Activated naive CD4-positive, alpha-beta T cell treated with anti-CD3 and anti-CD28 coated beads for 36 hours (primary cell): ENCODE measurements at regions of chr21 and their contacts with region 1.

Region 1: GRCh38 chr21:33608559-33608958 is 20.1 kb upstream of the DONSON start:
- DNase-seq: no peak
- H3K4me3 Mint-ChIP-seq: no peak overlapping the region
- H3K27ac Mint-ChIP-seq: peak overlapping the region; percentile 1
- H3K4me1 Mint-ChIP-seq: no peaks in the 10 kb centered on the region
- H3K27me3 Mint-ChIP-seq: no peaks in the 10 kb centered on the region

Region 2: GRCh38 chr21:33441489-33442477 is 166.8 kb before region 1 on chr21:
- CTCF ChIA-PET with region 1: interaction called, 10 read pairs
- intact Hi-C with region 1: loop called (anchors 1 kb)
- DNase-seq: no peak
- H3K4me3 Mint-ChIP-seq: no peak overlapping the region
- H3K27ac Mint-ChIP-seq: no peak overlapping the region
- H3K4me1 Mint-ChIP-seq: peaks cover 4% of the 10 kb centered on the region
- H3K27me3 Mint-ChIP-seq: no peaks in the 10 kb centered on the region

Region 3: GRCh38 chr21:33578959-33579542 is 29.5 kb before region 1 on chr21:
- CTCF ChIA-PET with region 1: interaction called, 14 read pairs
- intact Hi-C with region 1: no loop called
- DNase-seq: no peak
- H3K4me3 Mint-ChIP-seq: no peak overlapping the region
- H3K27ac Mint-ChIP-seq: peak overlapping the region; percentile 82
- H3K4me1 Mint-ChIP-seq: peaks cover 12% of the 10 kb centered on the region
- H3K27me3 Mint-ChIP-seq: no peaks in the 10 kb centered on the region

Region 4: GRCh38 chr21:33619726-33620125 is 11.2 kb after region 1 on chr21:
- CTCF ChIA-PET with region 1: interaction called, 15 read pairs
- intact Hi-C with region 1: no loop called
- DNase-seq: no peak
- H3K4me3 Mint-ChIP-seq: no peak overlapping the region
- H3K27ac Mint-ChIP-seq: no peak overlapping the region
- H3K4me1 Mint-ChIP-seq: no peaks in the 10 kb centered on the region
- H3K27me3 Mint-ChIP-seq: no peaks in the 10 kb centered on the region